PC-9 (cell line): ENCODE measurements at regions of chr10 and their contacts with region 1.

Region 1: DNA sequence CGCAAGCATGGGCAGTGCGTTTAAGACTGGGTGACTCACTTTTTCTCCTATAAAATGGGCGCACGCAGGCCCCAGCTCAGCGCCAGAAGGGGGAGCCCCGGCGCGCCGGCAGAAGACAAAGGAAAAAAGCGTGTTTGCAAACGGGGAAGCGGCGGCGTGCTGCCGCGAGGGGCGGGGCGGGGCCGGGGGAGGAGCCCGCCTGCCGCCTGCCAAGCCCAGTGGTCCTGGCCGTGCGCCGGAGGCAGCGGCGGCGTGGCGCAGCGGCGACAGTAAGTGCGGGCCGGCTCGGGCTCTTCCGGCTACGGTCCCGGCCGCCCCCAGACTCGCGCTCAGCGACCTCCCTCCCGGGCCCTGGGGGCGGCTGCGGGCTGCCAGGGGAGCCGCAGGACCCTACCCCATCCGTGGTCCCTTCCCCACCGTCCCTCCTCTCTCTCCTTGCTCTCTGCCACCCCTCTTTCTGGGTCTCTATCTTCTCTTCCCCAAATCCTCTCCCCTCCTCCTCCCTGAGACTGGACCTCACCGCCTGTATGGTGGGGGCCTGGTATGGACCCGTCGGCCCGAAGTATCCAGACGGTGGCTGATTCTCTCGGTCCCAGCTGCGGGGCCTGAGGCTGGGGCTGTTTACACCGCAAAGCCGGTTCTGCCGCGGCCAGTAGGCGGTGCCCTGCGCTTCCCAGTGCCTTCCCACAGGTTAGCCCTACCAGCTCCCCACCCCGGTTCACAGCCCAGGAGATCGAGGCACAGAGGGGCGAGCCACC is at the start of gene SLC29A3:
- DNase-seq: peak; percentile 68 to 83
- H3K4me3 ChIP-seq: peak within 1 kb of the TSS; percentile 65
- H3K27ac ChIP-seq: no peak within 1 kb of the TSS
- H3K4me1 ChIP-seq: peaks cover 19% of the 10 kb centered on the region
- H3K27me3 ChIP-seq: no peaks in the 10 kb centered on the region
- CTCF ChIP-seq: peak; percentile 84
- total RNA-seq, gene SLC29A3: 24.1 and 35.7 TPM in 2 replicates

Region 2: GRCh38 chr10:71359364-71360046 is 40.3 kb after region 1 on chr10:
- CTCF ChIA-PET with region 1: interaction called, 3 read pairs
- POLR2A ChIA-PET with region 1: no interaction called
- intact Hi-C with region 1: loop called (anchors 1 kb)
- DNase-seq: no peak
- H3K4me3 ChIP-seq: no peak overlapping the region
- H3K27ac ChIP-seq: no peak overlapping the region
- H3K4me1 ChIP-seq: peaks cover 17% of the 10 kb centered on the region
- H3K27me3 ChIP-seq: no peaks in the 10 kb centered on the region
- CTCF ChIP-seq: no peak

Region 3: DNA sequence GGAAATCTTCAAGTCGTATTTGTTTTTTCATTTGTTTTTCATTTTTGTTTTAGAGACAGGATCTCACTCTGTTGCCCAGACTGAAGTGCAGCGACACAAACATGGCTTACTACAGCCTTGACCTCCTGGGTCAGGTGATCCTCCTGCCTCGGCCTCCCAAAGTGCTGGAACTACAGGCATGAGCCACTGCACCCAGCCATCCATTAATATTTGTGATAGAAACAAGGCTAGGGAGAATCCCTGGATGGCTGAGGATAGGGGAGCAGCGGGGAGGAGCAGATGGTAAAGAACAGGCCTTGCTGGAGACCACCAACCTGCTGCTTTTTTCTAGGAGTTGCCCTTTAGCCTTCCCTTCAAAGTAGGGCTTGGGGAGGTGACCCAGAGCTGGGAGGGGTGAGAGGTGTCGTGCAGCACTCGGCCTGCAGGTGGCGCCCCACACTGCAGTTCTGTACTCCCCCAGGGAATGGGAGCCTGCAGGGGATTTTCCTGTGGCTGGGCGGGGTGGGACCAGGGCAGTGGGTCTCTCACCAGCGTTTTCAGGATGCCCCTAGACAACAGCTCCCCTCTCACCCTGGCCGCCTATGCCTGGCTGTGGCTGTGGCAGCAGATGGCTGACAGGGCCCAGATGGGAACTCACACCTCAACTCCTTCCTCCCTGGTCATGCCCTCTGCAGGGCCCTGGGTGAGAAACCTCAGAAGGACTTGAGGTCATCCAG is 64.9 kb after region 1 on chr10:
- CTCF ChIA-PET with region 1: interaction called, 11 read pairs
- POLR2A ChIA-PET with region 1: no interaction called
- intact Hi-C with region 1: no loop called
- DNase-seq: peak in 1 of 2 experiments; percentile 77
- H3K4me3 ChIP-seq: no peak overlapping the region
- H3K27ac ChIP-seq: no peak overlapping the region
- H3K4me1 ChIP-seq: peaks cover 8% of the 10 kb centered on the region
- H3K27me3 ChIP-seq: no peaks in the 10 kb centered on the region
- CTCF ChIP-seq: peak; percentile 98

Region 4: GRCh38 chr10:71501402-71501801 is 182.2 kb after region 1 on chr10:
- CTCF ChIA-PET with region 1: no interaction called
- POLR2A ChIA-PET with region 1: no interaction called
- intact Hi-C with region 1: no loop called
- DNase-seq: no peak
- H3K4me3 ChIP-seq: no peak overlapping the region
- H3K27ac ChIP-seq: no peak overlapping the region
- H3K4me1 ChIP-seq: no peaks in the 10 kb centered on the region
- H3K27me3 ChIP-seq: no peaks in the 10 kb centered on the region
- CTCF ChIP-seq: no peak

Region 5: DNA sequence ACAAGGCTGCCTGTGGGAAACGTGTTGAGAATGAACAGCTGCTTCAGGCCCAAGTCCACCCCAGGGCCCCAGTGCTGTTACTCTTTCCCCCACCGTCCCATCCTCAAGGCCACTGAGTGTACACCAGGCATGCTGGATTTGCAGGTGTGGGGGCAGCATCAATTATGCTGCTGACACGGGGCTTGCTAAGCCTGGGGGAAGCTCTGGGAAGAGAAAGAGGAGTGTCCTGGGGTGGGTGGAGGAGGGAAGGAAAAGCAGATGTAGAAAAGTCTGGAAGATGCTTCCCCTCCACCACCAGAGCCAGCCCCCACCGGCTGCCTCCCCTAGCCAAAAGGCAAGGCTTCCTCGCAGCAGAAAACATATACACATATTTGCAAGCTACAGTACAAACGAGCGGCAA is 231.4 kb after region 1 on chr10:
- CTCF ChIA-PET with region 1: interaction called, 13 read pairs
- POLR2A ChIA-PET with region 1: no interaction called
- intact Hi-C with region 1: no loop called
- DNase-seq: no peak
- H3K4me3 ChIP-seq: no peak overlapping the region
- H3K27ac ChIP-seq: no peak overlapping the region
- H3K4me1 ChIP-seq: no peaks in the 10 kb centered on the region
- H3K27me3 ChIP-seq: no peaks in the 10 kb centered on the region
- CTCF ChIP-seq: no peak

Region 6: DNA sequence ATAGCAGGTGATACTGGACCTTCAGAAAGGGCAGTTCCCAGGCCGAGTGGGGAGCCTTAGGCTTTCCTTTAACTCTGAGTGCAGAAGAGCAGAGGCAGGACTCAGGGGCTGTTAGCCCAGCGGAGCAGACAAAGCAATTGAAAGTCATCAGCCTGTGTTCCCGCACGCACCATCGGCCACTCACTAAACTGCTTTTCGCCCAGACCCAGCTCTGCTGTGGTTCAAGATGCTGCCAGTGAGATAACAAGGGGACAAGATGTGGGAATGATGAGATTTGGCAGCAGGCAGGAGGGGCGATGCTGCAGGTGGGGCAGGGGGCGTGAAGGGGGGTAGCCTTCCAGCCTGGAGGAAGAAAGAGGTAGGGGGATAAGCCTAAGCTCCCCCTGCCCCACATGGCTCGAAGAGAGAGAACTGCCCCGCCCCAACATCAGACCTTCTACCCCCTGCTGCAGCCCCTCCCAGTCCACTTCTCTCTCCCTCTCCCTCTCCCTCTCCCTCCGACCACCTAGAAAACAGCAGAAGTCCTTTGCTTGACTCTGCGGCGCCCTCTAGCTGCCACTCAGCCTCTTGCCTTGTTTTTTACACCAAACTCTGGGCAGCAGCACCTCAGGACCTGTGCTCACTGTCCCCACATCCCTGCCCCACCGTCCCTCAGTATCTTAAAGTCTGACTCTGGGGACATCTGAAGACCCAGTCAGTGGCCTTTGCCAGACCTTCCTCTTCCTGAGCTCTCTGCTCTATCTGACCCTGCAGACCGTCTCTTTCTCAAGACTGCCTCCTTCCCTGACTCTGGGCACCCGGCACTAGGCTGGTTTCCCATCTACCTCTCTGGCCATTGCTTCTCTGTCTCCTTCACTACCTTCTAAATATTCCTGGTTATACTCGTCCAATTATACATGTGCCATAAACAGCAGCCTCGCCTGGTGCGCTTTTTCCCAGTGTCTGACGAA is 289.9 kb after region 1 on chr10:
- CTCF ChIA-PET with region 1: interaction called, 14 read pairs
- POLR2A ChIA-PET with region 1: no interaction called
- intact Hi-C with region 1: loop called (anchors 1 kb)
- DNase-seq: peak; percentile 48 to 69
- H3K4me3 ChIP-seq: no peak overlapping the region
- H3K27ac ChIP-seq: no peak overlapping the region
- H3K4me1 ChIP-seq: peaks cover 60% of the 10 kb centered on the region
- H3K27me3 ChIP-seq: no peaks in the 10 kb centered on the region
- CTCF ChIP-seq: peak; percentile 92

Region 7: GRCh38 chr10:71696628-71697326 is 377.6 kb after region 1 on chr10:
- CTCF ChIA-PET with region 1: interaction called, 6 read pairs
- POLR2A ChIA-PET with region 1: no interaction called
- intact Hi-C with region 1: loop called (anchors 1 kb)
- DNase-seq: peak in 1 of 2 experiments; percentile 68
- H3K4me3 ChIP-seq: no peak overlapping the region
- H3K27ac ChIP-seq: no peak overlapping the region
- H3K4me1 ChIP-seq: peaks cover 27% of the 10 kb centered on the region
- H3K27me3 ChIP-seq: no peaks in the 10 kb centered on the region
- CTCF ChIP-seq: peak; percentile 98

Region 8: DNA sequence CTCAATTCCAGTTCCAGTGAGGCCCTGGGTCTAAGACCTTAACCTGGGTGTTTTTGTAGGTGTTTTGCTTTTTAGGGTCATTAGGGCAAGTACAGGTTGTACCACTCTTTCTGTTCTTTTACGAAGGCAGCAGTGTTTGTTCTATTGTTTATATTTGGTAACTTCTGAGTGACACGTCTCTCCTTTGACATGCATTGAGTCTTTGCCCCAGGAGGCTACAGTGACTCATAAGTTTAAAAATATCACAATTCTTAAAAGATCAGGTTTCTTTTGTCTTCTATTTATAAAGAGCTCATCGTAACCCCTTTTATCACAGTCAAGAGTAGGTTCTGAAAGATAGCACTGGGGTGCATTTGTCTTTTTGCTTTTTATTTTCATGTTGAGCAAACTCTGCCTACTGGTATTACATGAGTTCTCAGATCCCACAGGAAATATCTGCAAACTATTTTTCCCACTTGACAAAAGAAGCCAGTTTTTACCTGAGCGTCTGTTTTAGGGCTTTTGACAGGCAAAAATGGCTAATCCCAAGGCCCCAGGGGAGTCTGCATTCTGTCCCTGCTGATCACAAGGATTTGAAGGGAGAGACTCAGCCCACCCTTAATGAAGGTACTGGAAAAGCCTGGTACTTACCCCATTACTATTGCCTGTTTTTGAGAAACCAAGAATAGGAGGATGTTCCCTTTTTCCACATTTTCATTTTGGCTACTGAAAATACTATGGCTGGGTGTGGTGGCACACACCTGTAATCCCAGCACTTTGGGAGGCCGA is 1798.9 kb after region 1 on chr10:
- CTCF ChIA-PET with region 1: no interaction called
- POLR2A ChIA-PET with region 1: interaction called, 18 read pairs
- intact Hi-C with region 1: no loop called
- DNase-seq: peak; percentile 19 to 94
- H3K4me3 ChIP-seq: peak overlapping the region; percentile 29; the same call in 1 of the 2 replicates
- H3K27ac ChIP-seq: peak overlapping the region; percentile 67
- H3K4me1 ChIP-seq: peaks cover 33% of the 10 kb centered on the region
- H3K27me3 ChIP-seq: no peaks in the 10 kb centered on the region
- CTCF ChIP-seq: no peak